ENCODE measurements at regions of chr17 and their contacts with region 1.

Region 1: DNA sequence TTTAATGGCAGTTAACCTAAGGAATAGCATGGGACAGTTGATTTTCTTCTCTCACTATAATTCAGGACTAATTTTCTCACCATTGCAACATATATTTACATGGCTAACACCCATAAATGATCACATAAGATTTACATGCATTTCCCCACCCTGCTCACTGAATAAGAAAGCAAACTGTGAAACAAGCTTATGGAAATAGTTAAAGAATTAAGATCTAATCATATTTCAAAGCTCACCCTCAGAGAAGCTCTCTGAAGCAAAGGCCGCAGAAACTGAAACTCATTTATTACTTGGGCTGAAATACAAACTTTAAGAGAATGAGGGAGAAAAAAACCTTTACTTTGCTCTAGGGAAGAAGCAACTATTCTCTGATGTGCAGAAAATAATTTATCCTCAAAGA is 218.7 kb upstream of the AXIN2 start:
- DNase-seq: no peak
- H3K4me3 ChIP-seq: no peak overlapping the region
- H3K27ac ChIP-seq: no peak overlapping the region
- H3K4me1 ChIP-seq: peaks cover 2% of the 10 kb centered on the region
- H3K27me3 ChIP-seq: no peaks in the 10 kb centered on the region
- CTCF ChIP-seq: no peak
- EP300 ChIP-seq: no peak
- POLR2A ChIP-seq: no peak

Region 2: DNA sequence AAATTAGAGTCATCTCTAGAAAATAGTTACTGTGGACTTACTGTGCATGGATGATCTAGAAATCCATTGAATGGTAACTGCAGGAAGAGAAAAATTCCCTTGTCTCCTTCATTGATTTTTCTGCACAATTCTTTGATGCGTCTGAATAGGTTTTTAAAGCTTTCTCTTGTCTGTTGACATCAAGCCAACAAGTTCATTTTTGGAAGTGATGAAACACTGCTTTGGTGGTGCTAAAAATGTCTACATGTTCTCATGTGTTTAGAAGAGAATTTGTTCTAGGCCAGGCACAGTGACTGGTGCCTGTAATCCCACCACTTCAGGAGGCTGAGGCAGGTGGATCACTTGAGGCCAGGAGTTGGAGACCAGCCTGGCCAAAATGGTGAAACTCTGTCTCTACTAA is 161.6 kb before region 1 on chr17:
- intact Hi-C with region 1: loop called in 1 of 4 experiments (anchors 2 kb)
- DNase-seq: no peak
- H3K4me3 ChIP-seq: no peak overlapping the region
- H3K27ac ChIP-seq: no peak overlapping the region
- H3K4me1 ChIP-seq: no peaks in the 10 kb centered on the region
- H3K27me3 ChIP-seq: no peaks in the 10 kb centered on the region
- CTCF ChIP-seq: no peak
- EP300 ChIP-seq: no peak
- POLR2A ChIP-seq: no peak

Region 3: DNA sequence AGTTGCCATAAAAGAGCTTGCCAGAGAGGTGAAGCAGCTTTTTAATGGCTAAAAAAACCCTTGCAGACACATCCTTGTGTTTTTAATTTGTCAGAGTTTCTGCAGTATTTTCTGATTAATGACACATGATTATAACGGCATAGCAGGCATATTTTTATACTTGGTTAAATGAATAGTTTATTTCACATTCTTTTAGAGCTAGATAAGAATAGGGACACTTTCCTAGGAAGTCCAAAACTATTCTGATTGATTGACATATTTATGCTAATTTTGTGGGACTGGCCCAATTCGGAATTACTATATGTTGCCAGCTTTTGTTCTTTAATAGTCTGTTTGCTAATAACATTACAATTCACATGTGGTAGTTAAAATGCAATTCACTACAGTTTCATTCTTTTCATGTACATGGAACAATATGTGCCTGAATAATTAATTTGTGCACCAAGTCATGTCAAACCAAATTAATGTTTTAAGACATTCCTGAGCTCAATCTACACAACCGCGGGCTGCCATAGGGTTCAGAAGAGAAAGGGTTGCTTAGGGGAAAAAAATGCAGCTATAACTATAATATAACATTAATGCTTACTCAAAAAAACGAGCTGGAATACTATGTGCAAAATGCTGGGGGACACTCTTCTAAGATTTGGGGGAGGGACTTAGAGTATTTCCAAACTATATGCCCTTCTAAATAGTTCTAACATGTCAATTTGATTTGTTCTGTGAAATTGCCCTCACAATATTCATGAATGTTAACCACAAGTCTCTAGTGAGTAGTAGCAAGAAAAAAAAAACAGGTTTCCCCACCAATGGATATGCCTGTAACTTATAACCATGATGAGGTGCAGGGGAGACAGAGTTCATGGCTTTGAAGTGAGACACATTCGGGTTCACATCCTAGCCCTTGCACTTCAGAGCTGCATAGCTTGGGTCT is 106.5 kb after region 1 on chr17:
- intact Hi-C with region 1: no loop called
- DNase-seq: no peak
- H3K4me3 ChIP-seq: no peak overlapping the region
- H3K27ac ChIP-seq: no peak overlapping the region
- H3K4me1 ChIP-seq: no peaks in the 10 kb centered on the region
- H3K27me3 ChIP-seq: no peaks in the 10 kb centered on the region
- CTCF ChIP-seq: no peak
- EP300 ChIP-seq: no peak
- POLR2A ChIP-seq: no peak

Measured in ovary (tissue), 10 donors.